ENCODE measurements at regions of chr11 and their contacts with region 1.

Region 1: DNA sequence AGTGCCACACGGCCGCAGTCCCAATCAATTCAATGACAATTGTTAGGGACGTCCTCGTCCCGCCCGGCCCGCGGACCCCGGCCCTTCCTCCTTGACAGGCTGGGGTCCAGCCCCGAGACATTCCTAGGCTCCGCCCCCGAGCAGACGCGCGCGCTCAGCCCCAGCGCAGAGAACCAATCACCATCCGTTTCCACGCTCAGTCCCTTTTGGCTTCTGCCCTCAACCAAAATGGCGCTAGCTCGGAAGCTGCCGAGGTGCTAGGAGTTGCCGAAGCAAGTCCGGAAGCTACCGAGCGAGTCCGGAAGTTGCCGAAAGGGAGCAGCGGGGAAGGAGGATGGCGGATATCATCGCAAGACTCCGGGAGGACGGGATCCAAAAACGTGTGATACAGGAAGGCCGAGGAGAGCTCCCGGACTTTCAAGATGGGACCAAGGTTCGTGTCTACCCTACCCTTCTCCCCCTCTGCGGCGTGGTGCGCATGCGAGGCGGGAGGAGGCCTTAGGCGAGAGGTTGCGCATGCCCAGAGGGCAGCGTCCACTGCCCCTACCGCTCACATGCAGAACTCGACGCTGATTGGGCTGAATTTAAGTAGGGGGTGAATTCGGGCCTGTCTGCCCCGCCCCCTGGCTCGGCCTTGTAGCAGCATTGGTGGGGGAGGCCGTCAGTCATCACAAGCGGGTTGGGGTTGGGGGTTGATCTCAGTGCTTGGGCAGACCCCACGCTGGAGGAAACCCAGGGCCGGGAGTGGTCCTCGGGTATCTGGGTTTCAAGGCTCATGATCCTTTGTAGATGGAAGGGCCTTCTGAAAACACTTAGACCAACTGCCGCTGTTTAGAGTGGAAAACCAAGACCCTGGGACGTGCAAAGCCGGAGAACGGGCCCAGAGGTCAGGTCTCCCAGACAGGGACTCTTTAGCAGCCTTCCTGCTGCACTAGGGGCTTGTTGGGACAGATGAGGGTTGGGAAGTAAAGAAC is at the start of gene AIP:
- DNase-seq: peak; percentile 98
- H3K4me3 ChIP-seq: peak within 1 kb of the TSS; percentile 49 to 57
- H3K27ac ChIP-seq: peak within 1 kb of the TSS; percentile 82 to 88
- H3K4me1 ChIP-seq: peaks cover 9% of the 10 kb centered on the region
- H3K27me3 ChIP-seq: no peaks in the 10 kb centered on the region
- CTCF ChIP-seq: peak in 2 of 3 experiments; percentile 40
- POLR2A ChIP-seq: no peak
- total RNA-seq, gene AIP: 34.6 to 61.7 TPM

Region 2: DNA sequence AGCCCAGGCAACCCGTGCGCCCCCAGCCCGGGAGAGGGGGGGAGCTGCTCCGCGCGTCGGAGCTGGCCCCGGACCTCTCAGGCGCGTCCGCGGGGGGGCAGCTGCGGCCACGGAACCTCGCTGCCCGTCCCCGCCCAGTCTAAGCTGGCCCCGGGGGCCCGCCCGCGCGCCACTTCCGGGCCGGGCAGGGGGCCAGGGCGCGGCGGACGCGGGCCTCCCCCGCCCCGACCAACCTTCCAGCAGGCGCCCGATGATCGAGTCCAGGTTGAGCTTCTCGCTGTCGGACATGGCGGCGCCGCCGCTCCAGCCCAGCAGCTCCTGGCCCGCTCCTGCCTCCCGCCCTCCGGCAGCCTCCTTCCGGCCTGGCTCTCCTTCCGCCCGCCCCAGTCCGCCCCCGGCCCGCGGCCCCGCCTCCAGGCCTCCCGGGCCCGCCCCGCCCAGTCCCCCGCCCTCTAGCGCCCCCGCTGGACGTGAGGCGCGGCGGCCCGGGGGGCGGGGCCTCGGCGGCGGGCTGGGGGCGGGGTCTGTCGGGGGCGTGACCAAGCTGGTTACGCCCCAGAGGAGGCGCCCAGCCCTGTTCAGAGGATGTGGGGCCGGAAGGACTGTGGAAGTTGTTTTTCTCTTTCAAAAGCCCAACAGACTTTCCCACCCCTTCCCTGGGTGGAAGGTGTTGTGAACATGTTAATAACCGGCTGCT is 81.5 kb before region 1 on chr11 and contains the start of gene PPP1CA:
- intact Hi-C with region 1: loop called (anchors 10 kb)
- DNase-seq: peak; percentile 92
- H3K4me3 ChIP-seq: peak within 1 kb of the TSS; percentile 88 to 93
- H3K27ac ChIP-seq: peak within 1 kb of the TSS; percentile 85 to 92
- H3K4me1 ChIP-seq: peaks cover 16% of the 10 kb centered on the region
- H3K27me3 ChIP-seq: no peaks in the 10 kb centered on the region
- CTCF ChIP-seq: peak in 2 of 3 experiments; percentile 2 to 68
- POLR2A ChIP-seq: no peak
- total RNA-seq, gene PPP1CA: 100 to 129 TPM

Measured in testis (tissue), 5 donors.